Activated naive CD4-positive, alpha-beta T cell treated with anti-CD3 and anti-CD28 coated beads for 36 hours (primary cell): ENCODE measurements at regions of chr7 and their contacts with region 1.

Region 1: DNA sequence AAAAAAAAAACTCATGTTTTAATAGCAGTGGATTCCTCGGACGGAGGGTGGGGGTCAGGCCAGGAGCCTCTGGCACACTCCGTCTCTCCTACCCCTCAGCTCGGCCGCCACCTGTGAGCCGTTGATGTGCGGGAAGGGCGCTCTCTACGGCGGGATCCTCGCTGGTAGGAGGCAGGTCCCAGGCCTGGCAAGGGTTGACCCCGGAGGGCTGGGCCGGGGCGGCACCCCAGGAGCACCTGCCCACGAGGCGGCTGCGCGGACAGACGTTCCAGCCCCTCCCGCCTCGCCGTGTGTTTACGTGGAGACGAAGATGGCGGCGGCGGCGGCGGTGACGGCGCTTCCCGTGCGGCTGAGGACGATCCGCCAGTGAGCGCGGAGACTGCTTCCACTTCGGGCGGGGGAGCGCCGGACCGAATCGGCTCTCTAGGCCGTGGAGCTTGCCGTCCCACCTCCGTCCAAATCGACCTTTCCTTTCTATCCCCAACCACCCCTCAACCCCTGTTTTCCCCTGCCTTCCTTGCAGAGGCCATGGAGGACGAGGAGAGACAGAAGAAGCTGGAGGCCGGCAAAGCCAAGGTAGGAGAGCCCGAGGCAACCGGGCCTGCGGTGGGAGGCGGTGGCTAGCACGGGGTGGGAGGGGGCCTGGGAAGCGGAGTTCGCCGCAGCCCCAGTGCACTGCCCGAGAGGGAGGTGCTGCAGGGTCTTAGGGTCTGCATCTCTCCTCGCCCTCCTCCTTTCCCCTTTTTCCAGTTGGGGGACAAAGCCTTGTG is at the start of gene AKAP9:
- DNase-seq: peak; percentile 91
- H3K4me3 Mint-ChIP-seq: peak within 1 kb of the TSS; percentile 90
- H3K27ac Mint-ChIP-seq: peak within 1 kb of the TSS; percentile 94
- H3K4me1 Mint-ChIP-seq: peaks cover 29% of the 10 kb centered on the region
- H3K27me3 Mint-ChIP-seq: no peaks in the 10 kb centered on the region
- total RNA-seq, gene AKAP9: 20.0 to 26.2 TPM

Region 2: DNA sequence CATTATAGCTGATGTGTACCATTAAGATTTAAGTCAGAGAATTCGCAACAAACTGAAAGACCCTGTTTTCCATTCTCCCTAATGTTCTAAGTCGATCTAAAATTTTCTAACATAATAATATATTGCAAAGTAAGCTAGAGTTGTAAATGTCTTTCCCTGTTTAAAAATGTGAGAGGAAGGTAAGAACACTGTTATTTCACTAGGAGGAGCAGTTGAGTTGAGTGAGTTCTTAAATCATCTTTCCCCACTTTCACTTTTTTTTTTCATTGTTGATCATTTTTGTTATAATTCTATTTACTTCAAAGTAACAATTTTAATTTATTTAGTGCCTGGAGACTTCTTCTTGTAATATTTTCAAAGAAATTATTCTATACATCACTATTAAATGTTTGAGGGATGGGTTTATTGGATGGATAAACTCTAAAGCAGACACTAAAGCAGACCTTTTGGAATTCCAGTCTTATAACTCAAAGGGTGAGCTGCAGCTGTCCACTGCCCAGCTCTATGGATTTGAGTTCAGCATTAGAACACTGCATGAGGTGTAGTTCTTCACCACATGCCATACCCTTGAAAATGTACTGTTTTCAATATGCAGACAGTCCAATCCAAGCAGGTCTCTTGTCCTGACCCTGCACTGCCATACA is 857.8 kb before region 1 on chr7:
- CTCF ChIA-PET with region 1: no interaction called
- intact Hi-C with region 1: loop called (anchors 5 kb)
- DNase-seq: no peak
- H3K4me3 Mint-ChIP-seq: peak overlapping the region; percentile 13
- H3K27ac Mint-ChIP-seq: no peak overlapping the region
- H3K4me1 Mint-ChIP-seq: peaks cover 36% of the 10 kb centered on the region
- H3K27me3 Mint-ChIP-seq: no peaks in the 10 kb centered on the region

Region 3: DNA sequence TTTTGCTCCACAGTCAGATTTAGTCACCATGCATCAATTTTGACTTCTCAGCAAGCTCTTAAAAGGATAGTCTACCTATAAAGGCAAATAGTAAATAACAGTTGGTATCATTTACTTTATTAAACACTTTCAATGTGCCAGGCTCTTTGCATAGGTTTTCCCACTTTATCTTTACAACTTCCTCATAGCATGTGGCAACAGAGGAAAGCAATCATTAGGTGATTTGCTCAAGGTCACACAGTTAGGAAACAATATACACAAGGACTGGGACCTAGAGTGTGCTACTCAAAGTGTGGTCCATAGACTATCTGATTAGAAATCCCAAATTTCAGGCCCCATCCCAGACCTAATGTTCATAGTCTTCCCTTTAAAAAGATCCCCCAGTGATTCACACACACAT is 272.5 kb before region 1 on chr7:
- CTCF ChIA-PET with region 1: no interaction called
- intact Hi-C with region 1: no loop called
- DNase-seq: no peak
- H3K4me3 Mint-ChIP-seq: no peak overlapping the region
- H3K27ac Mint-ChIP-seq: no peak overlapping the region
- H3K4me1 Mint-ChIP-seq: no peaks in the 10 kb centered on the region
- H3K27me3 Mint-ChIP-seq: no peaks in the 10 kb centered on the region

Region 4: GRCh38 chr7:91869661-91870060 is 71.1 kb before region 1 on chr7:
- CTCF ChIA-PET with region 1: no interaction called
- intact Hi-C with region 1: no loop called
- DNase-seq: no peak
- H3K4me3 Mint-ChIP-seq: no peak overlapping the region
- H3K27ac Mint-ChIP-seq: no peak overlapping the region
- H3K4me1 Mint-ChIP-seq: peaks cover 4% of the 10 kb centered on the region
- H3K27me3 Mint-ChIP-seq: no peaks in the 10 kb centered on the region

Region 5: GRCh38 chr7:91929463-91929862 is 11.3 kb before region 1 on chr7:
- CTCF ChIA-PET with region 1: interaction called, 3 read pairs
- intact Hi-C with region 1: loop called (anchors 1 kb)
- DNase-seq: peak; percentile 15
- H3K4me3 Mint-ChIP-seq: no peak overlapping the region
- H3K27ac Mint-ChIP-seq: no peak overlapping the region
- H3K4me1 Mint-ChIP-seq: peaks cover 19% of the 10 kb centered on the region
- H3K27me3 Mint-ChIP-seq: peaks cover 3% of the 10 kb centered on the region

Region 6: DNA sequence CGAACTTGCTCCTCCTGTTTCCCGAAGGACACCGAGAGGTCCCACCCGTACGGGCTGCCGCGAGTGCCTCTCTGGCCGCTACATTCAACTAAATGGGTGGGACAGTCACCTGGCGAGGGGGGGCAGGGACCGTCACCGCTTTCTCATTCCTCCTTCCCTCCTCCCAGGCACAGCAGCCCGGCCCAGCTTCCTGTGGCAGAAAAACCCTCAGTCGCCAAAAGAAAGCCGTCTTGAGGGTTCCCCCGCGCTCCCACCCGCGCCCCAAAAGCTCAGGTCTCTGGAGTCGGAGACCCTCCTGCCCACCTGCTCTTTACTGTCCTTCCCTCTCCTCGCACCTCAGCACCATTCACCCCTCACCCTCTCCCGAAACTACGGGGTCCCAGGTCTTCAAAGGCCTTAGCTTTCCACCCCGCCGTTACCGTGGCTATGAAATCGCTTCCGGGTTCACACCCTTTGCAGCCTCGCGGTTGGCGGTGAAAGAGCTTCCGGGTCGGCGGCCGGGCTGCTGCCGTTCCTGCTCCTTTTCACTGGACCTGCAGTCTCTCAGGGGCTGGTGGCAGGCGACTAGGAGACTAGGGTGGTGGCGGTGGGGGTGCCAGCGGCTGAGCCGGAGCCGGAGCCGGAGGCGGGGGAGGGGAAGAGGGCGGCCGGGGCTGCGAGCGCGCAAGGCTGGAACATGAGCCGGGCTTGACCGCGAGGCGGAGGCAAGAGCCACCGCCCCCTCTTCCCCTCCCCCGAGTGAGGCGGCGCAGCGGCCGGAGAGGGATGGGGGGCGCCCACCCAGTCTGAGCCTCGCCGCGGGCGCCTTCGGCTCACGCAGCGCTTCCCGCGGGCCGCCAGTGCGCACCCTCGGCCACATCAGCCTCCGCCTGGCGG is 305.0 kb after region 1 on chr7 and contains the starts of genes ANKIB1 and KRIT1:
- CTCF ChIA-PET with region 1: no interaction called
- intact Hi-C with region 1: loop called (anchors 1 kb)
- DNase-seq: peak; percentile 91
- H3K4me3 Mint-ChIP-seq: peak within 1 kb of the TSS; percentile 92
- H3K27ac Mint-ChIP-seq: peak within 1 kb of the TSS; percentile 95
- H3K4me1 Mint-ChIP-seq: peaks cover 33% of the 10 kb centered on the region
- H3K27me3 Mint-ChIP-seq: no peaks in the 10 kb centered on the region
- total RNA-seq, gene ANKIB1: 37.9 to 38.4 TPM
- total RNA-seq, gene KRIT1: 21.5 to 27.9 TPM